Activated naive CD4-positive, alpha-beta T cell treated with anti-CD3 and anti-CD28 coated beads for 36 hours (primary cell): ENCODE measurements at regions of chrX and their contacts with region 1.

Region 1: DNA sequence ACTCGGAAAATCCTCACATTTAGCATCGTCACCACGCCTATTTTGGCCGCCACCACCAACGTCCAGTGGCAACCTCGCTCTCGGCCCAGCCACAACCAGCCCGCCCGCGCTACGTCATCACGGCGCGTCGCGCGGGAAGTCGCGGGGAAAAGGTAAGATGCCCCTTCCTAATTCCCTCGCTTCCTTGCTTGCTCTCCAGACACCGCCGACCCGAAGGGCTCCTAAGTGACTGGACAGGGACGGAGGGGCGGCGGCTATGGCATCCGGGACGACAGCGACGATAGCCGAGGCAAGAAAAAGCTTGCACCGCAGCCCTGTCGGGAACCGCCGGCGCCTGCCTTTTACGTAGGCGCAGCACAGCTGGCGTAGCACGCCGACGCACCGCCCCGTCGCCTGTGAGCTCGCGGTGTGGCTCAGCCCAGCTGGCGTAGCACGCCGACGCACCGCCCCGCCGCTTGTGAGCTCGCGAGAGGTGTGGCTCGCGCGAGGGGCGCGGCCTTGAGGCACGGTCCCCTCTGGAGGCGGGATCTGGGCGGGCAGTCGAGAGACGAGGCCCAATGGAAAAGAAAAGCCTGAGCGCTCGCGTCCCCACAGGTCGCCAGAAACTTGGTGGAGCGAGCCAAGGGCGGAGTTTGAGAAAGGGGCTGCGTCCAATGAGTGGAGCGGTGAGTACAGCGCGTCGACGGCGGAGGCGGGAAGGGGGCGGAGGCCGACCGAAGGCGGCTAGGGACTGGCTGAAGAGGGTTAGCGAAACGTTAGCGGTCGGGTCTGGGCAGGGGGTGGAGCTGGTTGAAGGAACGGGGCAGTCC is at the start of gene HDAC6:
- DNase-seq: peak; percentile 96
- H3K4me3 Mint-ChIP-seq: peak within 1 kb of the TSS; percentile 93
- H3K27ac Mint-ChIP-seq: peak within 1 kb of the TSS; percentile 98
- H3K4me1 Mint-ChIP-seq: peaks cover 13% of the 10 kb centered on the region
- H3K27me3 Mint-ChIP-seq: no peaks in the 10 kb centered on the region
- total RNA-seq, gene HDAC6: 91.1 to 99.4 TPM

Region 2: GRCh38 chrX:47650164-47651042 is 1151.1 kb before region 1 on chrX and contains the start of gene ELK1:
- CTCF ChIA-PET with region 1: no interaction called
- intact Hi-C with region 1: loop called (anchors 10 kb)
- DNase-seq: peak; percentile 93
- H3K4me3 Mint-ChIP-seq: peak within 1 kb of the TSS; percentile 88
- H3K27ac Mint-ChIP-seq: peak within 1 kb of the TSS; percentile 91
- H3K4me1 Mint-ChIP-seq: peaks cover 37% of the 10 kb centered on the region
- H3K27me3 Mint-ChIP-seq: no peaks in the 10 kb centered on the region
- total RNA-seq, gene ELK1: 58.1 to 58.8 TPM

Region 3: GRCh38 chrX:48574270-48575266 is 226.9 kb before region 1 on chrX and contains the start of gene RBM3:
- CTCF ChIA-PET with region 1: no interaction called
- intact Hi-C with region 1: loop called (anchors 1 kb)
- DNase-seq: peak; percentile 95
- H3K4me3 Mint-ChIP-seq: peak within 1 kb of the TSS; percentile 96
- H3K27ac Mint-ChIP-seq: peak within 1 kb of the TSS; percentile 99
- H3K4me1 Mint-ChIP-seq: peaks cover 32% of the 10 kb centered on the region
- H3K27me3 Mint-ChIP-seq: no peaks in the 10 kb centered on the region
- total RNA-seq, gene RBM3: 139 to 143 TPM

Region 4: GRCh38 chrX:48676106-48676892 is 125.2 kb before region 1 on chrX:
- CTCF ChIA-PET with region 1: interaction called, 4 read pairs
- intact Hi-C with region 1: loop called (anchors 1 kb)
- DNase-seq: peak; percentile 90
- H3K4me3 Mint-ChIP-seq: peak overlapping the region; percentile 90
- H3K27ac Mint-ChIP-seq: peak overlapping the region; percentile 91
- H3K4me1 Mint-ChIP-seq: peaks cover 25% of the 10 kb centered on the region
- H3K27me3 Mint-ChIP-seq: no peaks in the 10 kb centered on the region

Region 5: DNA sequence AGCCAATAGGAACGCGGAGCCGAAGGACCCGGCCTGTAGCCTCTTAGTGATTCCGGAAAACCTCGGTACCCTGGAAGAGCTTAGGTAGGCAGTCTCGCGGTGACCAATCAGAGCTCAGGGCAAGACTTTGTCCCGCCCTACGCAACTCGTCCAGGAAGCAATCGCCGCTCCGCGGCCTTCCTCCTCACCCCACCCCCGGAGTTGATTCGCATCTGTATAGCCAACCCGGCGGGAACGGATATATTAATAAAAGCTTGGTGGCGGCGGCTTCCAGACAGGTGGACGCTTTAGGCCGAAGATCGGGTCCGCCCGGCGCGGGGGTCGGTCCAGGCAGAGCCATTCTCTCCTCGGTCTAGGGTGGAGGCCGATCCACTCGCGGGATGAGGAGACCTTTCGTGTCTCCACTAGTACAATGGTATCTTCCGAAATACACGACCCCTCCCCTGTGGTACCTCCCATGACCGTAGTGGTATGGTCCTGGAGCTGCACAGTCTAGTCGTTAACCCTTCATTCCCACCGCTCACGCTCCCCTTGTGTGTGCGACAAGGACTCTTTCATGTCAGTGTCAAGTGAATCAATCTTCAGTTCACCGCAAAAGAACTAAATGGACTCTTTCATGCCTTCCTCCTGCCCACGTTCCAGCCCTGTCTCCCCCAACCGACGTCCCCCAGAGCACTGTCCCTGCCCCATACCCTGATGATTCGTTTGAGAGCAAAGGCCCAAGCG is 64.1 kb before region 1 on chrX:
- CTCF ChIA-PET with region 1: no interaction called
- intact Hi-C with region 1: loop called (anchors 1 kb)
- DNase-seq: peak; percentile 92
- H3K4me3 Mint-ChIP-seq: peak overlapping the region; percentile 95
- H3K27ac Mint-ChIP-seq: peak overlapping the region; percentile 94
- H3K4me1 Mint-ChIP-seq: peaks cover 17% of the 10 kb centered on the region
- H3K27me3 Mint-ChIP-seq: no peaks in the 10 kb centered on the region

Region 6: DNA sequence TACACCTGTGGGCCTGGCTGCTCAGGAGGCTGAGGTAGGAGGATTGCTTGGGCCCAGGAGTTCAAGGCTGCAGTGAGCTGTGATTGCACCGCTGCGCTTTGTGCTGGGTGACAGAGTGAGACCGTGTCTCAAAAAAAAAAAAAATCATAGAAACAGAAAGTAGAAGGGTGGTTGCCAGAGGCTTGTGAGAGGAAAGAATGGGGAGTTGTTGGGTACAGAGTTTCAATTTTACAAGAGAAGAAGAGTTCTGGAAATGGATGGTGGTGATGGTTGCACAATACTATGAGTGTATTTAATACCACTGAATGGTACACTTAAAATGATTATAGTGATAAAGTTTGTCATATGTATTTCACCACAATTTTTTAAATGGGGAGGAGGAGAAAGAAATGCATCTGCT is 50.1 kb before region 1 on chrX:
- CTCF ChIA-PET with region 1: no interaction called
- intact Hi-C with region 1: no loop called
- DNase-seq: peak; percentile 28
- H3K4me3 Mint-ChIP-seq: no peak overlapping the region
- H3K27ac Mint-ChIP-seq: peak overlapping the region; percentile 24
- H3K4me1 Mint-ChIP-seq: peaks cover 6% of the 10 kb centered on the region
- H3K27me3 Mint-ChIP-seq: no peaks in the 10 kb centered on the region

Region 7: DNA sequence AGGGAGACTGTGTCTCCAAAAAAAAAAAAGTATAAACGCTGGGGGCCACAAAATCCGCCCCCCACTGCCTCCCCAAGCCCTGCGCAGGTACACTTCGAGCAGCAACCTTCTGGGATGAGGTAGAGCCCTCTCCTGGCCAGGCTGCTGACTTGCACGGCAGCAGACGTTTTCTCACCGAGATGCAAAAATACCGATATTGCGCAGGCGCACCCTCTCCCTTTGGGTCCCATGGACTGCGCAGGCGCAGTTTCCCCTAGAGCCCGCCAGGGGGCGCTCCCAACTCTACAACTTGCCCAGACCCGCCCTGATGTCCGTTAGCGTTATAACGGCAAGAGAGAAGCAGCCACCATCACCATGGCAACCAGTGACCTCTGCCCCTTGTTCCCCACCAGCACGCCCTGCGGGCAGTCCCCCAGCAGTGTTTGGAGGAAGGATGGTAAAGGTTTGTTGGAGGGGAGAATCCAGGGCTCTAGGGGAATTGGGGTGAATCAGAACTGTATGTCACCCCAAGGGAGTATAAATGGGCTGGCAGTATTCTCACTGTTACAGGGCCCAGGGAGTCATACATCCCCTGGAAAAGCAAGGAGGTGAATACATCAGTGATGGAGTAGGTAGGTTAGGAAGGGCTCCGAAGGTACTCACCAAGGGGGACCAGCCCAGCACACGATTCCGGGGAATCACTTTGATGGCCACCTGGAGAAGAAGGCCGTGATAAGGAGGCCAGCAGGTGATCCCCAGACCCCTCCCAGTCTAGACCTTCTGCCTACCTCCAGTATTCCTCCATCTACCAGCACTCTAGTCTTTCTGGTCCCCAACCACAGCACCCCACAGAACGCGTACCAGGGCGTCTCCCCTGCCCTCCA is 115.9 kb after region 1 on chrX:
- CTCF ChIA-PET with region 1: no interaction called
- intact Hi-C with region 1: loop called (anchors 5 kb)
- DNase-seq: peak; percentile 92
- H3K4me3 Mint-ChIP-seq: peak overlapping the region; percentile 95
- H3K27ac Mint-ChIP-seq: peak overlapping the region; percentile 99
- H3K4me1 Mint-ChIP-seq: peaks cover 39% of the 10 kb centered on the region
- H3K27me3 Mint-ChIP-seq: peaks cover 2% of the 10 kb centered on the region

Region 8: GRCh38 chrX:49043220-49043986 is 241.9 kb after region 1 on chrX and contains the start of gene TFE3:
- CTCF ChIA-PET with region 1: no interaction called
- intact Hi-C with region 1: loop called (anchors 1 kb)
- DNase-seq: peak; percentile 98
- H3K4me3 Mint-ChIP-seq: peak within 1 kb of the TSS; percentile 93
- H3K27ac Mint-ChIP-seq: peak within 1 kb of the TSS; percentile 94
- H3K4me1 Mint-ChIP-seq: peaks cover 28% of the 10 kb centered on the region
- H3K27me3 Mint-ChIP-seq: no peaks in the 10 kb centered on the region
- total RNA-seq, gene TFE3: 34.7 to 35.5 TPM